ENCODE measurements at regions of chr6 and their contacts with region 1.

Region 1: DNA sequence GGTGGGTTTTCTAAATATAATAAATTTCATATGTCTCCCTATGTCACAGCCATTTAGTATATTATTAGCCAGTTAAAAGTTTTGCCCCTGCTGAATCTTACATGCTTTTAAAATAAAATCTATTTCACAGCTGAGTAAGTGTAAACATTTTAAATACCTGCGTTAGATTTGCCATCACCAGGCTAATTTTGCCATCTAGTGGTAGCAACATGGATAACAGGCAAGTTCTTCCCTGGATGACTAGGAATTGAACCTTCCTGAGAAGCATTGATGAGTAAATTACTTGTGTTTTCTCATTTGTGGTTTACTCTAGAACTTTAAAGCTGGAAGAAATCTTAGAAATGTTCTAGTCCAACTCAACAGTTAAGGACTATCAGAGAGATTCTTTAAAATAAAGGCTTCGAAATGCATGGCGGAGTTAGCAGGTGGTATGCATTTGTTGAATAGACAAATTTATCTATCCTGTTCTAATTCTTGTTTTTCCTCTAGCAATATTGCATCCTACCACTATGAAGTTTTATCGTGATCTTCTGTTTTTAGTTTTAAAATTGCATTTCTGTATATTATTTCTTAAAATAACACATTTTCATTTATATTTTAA is 2.6 kb downstream of the PRSS35 start:
- DNase-seq: peak; percentile 9
- H3K4me3 ChIP-seq: no peak overlapping the region
- H3K27ac ChIP-seq: no peak overlapping the region
- H3K4me1 ChIP-seq: peaks cover 7% of the 10 kb centered on the region
- H3K27me3 ChIP-seq: peaks cover 4% of the 10 kb centered on the region
- CTCF ChIP-seq: peak; percentile 50 to 74 (median 59)

Region 2: GRCh38 chr6:83417880-83418663 is 96.9 kb before region 1 on chr6:
- dilution Hi-C with region 1: loop called (anchors 25 kb)
- DNase-seq: no peak
- H3K4me3 ChIP-seq: no peak overlapping the region
- H3K27ac ChIP-seq: no peak overlapping the region
- H3K4me1 ChIP-seq: no peaks in the 10 kb centered on the region
- H3K27me3 ChIP-seq: no peaks in the 10 kb centered on the region
- CTCF ChIP-seq: peak in 2 of 3 experiments; percentile 49 to 52